ENCODE measurements at regions of chr4 and their contacts with region 1.

Region 1: GRCh38 chr4:153488006-153488891 is 22.1 kb downstream of the TMEM131L start:
- DNase-seq: peak; percentile 86
- ATAC-seq: peak; percentile 72
- H3K4me3 ChIP-seq: peak overlapping the region; percentile 40 to 65 (median 51)
- H3K4me3 Mint-ChIP-seq: peak overlapping the region; percentile 87
- H3K27ac ChIP-seq: peak overlapping the region; percentile 96 to 98
- H3K27ac Mint-ChIP-seq: peak overlapping the region; percentile 97
- H3K4me1 ChIP-seq: peaks cover 85 to 90% of the 10 kb centered on the region in 2 donors
- H3K4me1 Mint-ChIP-seq: peaks cover 85% of the 10 kb centered on the region
- H3K27me3 ChIP-seq: no peaks in the 10 kb centered on the region
- H3K27me3 Mint-ChIP-seq: no peaks in the 10 kb centered on the region
- CTCF ChIP-seq: no peak

Region 2: GRCh38 chr4:153471691-153472080 is 16.6 kb before region 1 on chr4:
- CTCF ChIA-PET with region 1: interaction called, 34 read pairs
- POLR2A ChIA-PET with region 1: interaction called, 31 read pairs
- intact Hi-C with region 1: loop called (anchors 1 kb)
- DNase-seq: peak; percentile 76
- ATAC-seq: peak; percentile 23
- H3K4me3 ChIP-seq: peak overlapping the region in 4 of 5 experiments; percentile 7 to 61 (median 33)
- H3K4me3 Mint-ChIP-seq: peak overlapping the region; percentile 94
- H3K27ac ChIP-seq: peak overlapping the region; percentile 74 to 83
- H3K27ac Mint-ChIP-seq: peak overlapping the region; percentile 90
- H3K4me1 ChIP-seq: peaks cover 57 to 77% of the 10 kb centered on the region in 2 donors
- H3K4me1 Mint-ChIP-seq: peaks cover 86% of the 10 kb centered on the region
- H3K27me3 ChIP-seq: no peaks in the 10 kb centered on the region
- H3K27me3 Mint-ChIP-seq: no peaks in the 10 kb centered on the region
- CTCF ChIP-seq: no peak

Region 3: DNA sequence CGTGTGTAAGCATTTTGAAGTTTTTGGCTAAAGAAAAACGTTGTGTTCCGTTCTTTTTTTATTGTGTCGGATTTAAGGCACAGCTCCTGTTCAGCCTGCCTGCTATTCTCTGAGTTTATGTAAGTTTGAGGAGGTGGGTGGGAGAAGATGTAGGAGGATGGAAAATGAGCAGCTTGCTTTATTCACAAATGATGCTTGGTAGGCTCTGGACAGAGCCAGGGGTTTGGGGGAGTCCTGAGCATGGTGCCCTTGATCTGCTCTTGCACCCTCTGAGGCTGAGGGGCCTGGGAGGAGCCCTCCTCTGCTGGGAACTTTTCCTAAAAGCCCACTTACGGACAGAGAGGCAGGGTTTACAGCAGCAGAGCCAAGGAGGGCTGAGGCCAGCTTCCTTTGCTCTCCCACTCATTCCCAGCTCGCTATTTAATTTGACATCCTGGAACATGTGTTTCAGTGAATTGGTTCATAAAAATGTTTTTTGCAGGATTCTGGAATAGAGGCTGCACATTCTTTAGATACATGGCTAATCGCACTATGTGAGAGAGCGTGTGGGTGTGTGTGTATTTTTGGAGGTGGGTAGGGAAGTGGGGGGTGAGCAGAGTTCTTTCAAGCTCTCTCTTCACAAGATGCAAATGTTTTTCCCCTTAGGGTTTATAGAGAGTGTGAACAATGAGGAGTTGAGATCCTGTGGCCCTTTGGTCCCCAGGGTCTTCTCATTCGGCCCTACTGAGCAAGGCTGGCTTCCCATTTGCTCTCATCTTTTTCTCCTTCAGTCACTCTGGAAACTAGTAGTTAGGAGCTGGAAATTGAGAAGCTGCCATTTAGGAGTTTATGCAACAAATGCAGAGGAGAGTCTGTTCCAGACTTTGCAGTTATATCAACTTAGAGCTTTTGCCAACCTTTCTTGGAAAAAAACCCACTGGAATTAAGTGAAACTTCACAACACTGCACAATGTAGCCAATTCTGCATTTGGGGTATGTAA is 10.0 kb after region 1 on chr4:
- CTCF ChIA-PET with region 1: interaction called, 5 read pairs
- POLR2A ChIA-PET with region 1: interaction called, 27 read pairs
- intact Hi-C with region 1: loop called (anchors 1 kb)
- DNase-seq: peak; percentile 62
- ATAC-seq: peak; percentile 82
- H3K4me3 ChIP-seq: peak overlapping the region in 2 of 5 experiments; percentile 18 to 30
- H3K4me3 Mint-ChIP-seq: peak overlapping the region; percentile 75
- H3K27ac ChIP-seq: peak overlapping the region; percentile 7 to 98
- H3K27ac Mint-ChIP-seq: peak overlapping the region; percentile 85
- H3K4me1 ChIP-seq: peaks cover 80 to 83% of the 10 kb centered on the region in 2 donors
- H3K4me1 Mint-ChIP-seq: peaks cover 91% of the 10 kb centered on the region
- H3K27me3 ChIP-seq: no peaks in the 10 kb centered on the region
- H3K27me3 Mint-ChIP-seq: no peaks in the 10 kb centered on the region
- CTCF ChIP-seq: no peak

Region 4: GRCh38 chr4:153521999-153522801 is 34.0 kb after region 1 on chr4:
- CTCF ChIA-PET with region 1: interaction called, 3 read pairs
- POLR2A ChIA-PET with region 1: interaction called, 3 read pairs
- intact Hi-C with region 1: loop called (anchors 1 kb)
- DNase-seq: peak; percentile 66
- ATAC-seq: peak; percentile 29
- H3K4me3 ChIP-seq: peak overlapping the region in 3 of 5 experiments; percentile 14 to 51 (median 17)
- H3K4me3 Mint-ChIP-seq: peak overlapping the region; percentile 82
- H3K27ac ChIP-seq: peak overlapping the region; percentile 61 to 87
- H3K27ac Mint-ChIP-seq: peak overlapping the region; percentile 88
- H3K4me1 ChIP-seq: peaks cover 91 to 96% of the 10 kb centered on the region in 2 donors
- H3K4me1 Mint-ChIP-seq: peaks cover 96% of the 10 kb centered on the region
- H3K27me3 ChIP-seq: no peaks in the 10 kb centered on the region
- H3K27me3 Mint-ChIP-seq: no peaks in the 10 kb centered on the region
- CTCF ChIP-seq: no peak

Region 5: GRCh38 chr4:154004507-154005170 is 516.4 kb after region 1 on chr4:
- CTCF ChIA-PET with region 1: no interaction called
- POLR2A ChIA-PET with region 1: no interaction called
- intact Hi-C with region 1: no loop called
- DNase-seq: no peak
- ATAC-seq: no peak
- H3K4me3 ChIP-seq: no peak overlapping the region
- H3K4me3 Mint-ChIP-seq: no peak overlapping the region
- H3K27ac ChIP-seq: no peak overlapping the region
- H3K27ac Mint-ChIP-seq: no peak overlapping the region
- H3K4me1 ChIP-seq: no peaks in the 10 kb centered on the region
- H3K4me1 Mint-ChIP-seq: no peaks in the 10 kb centered on the region
- H3K27me3 ChIP-seq: peaks cover 0 to 2% (median 0%) of the 10 kb centered on the region in 4 experiments
- H3K27me3 Mint-ChIP-seq: peaks cover 9% of the 10 kb centered on the region
- CTCF ChIP-seq: no peak

Measured in B cell (primary cell).